Psoas muscle (tissue), 8 donors: ENCODE measurements at regions of chr9 and their contacts with region 1.

Region 1: DNA sequence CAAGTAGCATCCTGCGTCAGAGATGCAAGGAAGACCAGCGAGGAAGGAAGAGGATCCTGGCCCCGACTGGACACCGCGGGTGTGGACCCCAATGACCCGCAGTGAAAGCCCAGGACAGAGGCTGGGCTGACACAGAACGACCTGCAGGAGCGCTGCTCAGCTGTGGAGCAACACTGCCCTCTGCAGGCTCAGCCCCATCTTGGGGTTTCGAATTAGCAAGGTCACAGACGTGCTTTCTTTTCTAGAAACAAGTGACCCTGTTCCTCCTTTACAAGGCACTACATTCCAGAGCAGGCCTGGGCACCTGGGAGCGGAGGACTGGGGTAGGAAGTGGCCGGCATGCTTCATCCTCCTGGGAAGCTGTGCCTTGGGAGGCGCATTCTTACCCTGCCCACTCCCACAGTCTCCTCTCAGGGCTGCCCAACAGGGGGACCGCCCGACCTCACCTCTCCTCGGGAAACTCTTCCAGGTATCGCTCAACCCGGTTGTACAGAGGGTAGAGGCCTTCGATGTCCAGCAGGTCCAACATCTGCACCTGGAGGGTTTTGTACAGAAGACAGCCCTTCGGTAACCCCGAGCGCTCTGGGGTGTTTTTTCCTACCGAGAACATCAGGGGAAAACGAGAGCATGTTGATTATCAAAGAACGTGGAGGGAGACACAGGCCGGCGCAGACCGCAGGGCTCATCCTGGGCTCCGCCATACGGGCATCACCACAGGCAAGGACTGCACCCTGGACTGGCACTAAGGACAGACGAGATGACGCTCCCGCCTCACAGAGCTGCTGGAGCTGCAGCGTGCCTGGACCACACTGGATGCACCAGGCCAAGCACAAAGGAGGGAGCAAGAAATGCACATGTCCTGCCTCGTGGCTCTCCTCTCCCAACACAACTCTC is 35.0 kb downstream of the IPPK start:
- DNase-seq: peak; percentile 78 to 88
- ATAC-seq: peak; percentile 85 to 92 (median 89)
- H3K4me3 ChIP-seq: no peak overlapping the region
- H3K27ac ChIP-seq: no peak overlapping the region
- H3K4me1 ChIP-seq: peaks cover 7% of the 10 kb centered on the region
- H3K27me3 ChIP-seq: no peaks in the 10 kb centered on the region
- CTCF ChIP-seq: peak; percentile 91

Region 2: GRCh38 chr9:92140074-92140753 is 494.7 kb before region 1 on chr9:
- intact Hi-C with region 1: loop called (anchors 5 kb)
- DNase-seq: peak; percentile 73 to 88
- ATAC-seq: peak; percentile 66 to 89 (median 80)
- H3K4me3 ChIP-seq: peak overlapping the region; percentile 52
- H3K27ac ChIP-seq: no peak overlapping the region
- H3K4me1 ChIP-seq: no peaks in the 10 kb centered on the region
- H3K27me3 ChIP-seq: peaks cover 0 to 24% (median 11%) of the 10 kb centered on the region in 3 donors
- CTCF ChIP-seq: peak; percentile 86

Region 3: GRCh38 chr9:92254381-92255337 is 380.3 kb before region 1 on chr9:
- intact Hi-C with region 1: loop called in 1 of 2 experiments (anchors 10 kb)
- DNase-seq: no peak
- ATAC-seq: no peak
- H3K4me3 ChIP-seq: no peak overlapping the region
- H3K27ac ChIP-seq: no peak overlapping the region
- H3K4me1 ChIP-seq: no peaks in the 10 kb centered on the region
- H3K27me3 ChIP-seq: no peaks in the 10 kb centered on the region
- CTCF ChIP-seq: no peak

Region 4: GRCh38 chr9:92325269-92325990 is 309.5 kb before region 1 on chr9 and contains the starts of genes CENPP and NOL8:
- intact Hi-C with region 1: loop called (anchors 5 to 10 kb)
- DNase-seq: peak; percentile 86 to 92
- ATAC-seq: peak; percentile 97 to 98 (median 97)
- H3K4me3 ChIP-seq: peak within 1 kb of the TSS; percentile 86
- H3K27ac ChIP-seq: peak within 1 kb of the TSS; percentile 98
- H3K4me1 ChIP-seq: peaks cover 29% of the 10 kb centered on the region
- H3K27me3 ChIP-seq: no peaks in the 10 kb centered on the region
- CTCF ChIP-seq: no peak
- total RNA-seq, gene CENPP: 5.9 to 15.7 (median 8.0) TPM
- total RNA-seq, gene NOL8: 14.5 to 29.4 (median 20.1) TPM

Region 5: GRCh38 chr9:92349771-92350739 is 284.9 kb before region 1 on chr9:
- intact Hi-C with region 1: loop called in 1 of 2 experiments (anchors 5 kb)
- DNase-seq: no peak
- ATAC-seq: no peak
- H3K4me3 ChIP-seq: no peak overlapping the region
- H3K27ac ChIP-seq: peak overlapping the region; percentile 33
- H3K4me1 ChIP-seq: no peaks in the 10 kb centered on the region
- H3K27me3 ChIP-seq: no peaks in the 10 kb centered on the region
- CTCF ChIP-seq: no peak